ENCODE measurements at regions of chr4 and their contacts with region 1.

Region 1: GRCh38 chr4:186172546-186172945 is 18.8 kb upstream of the CYP4V2 start:
- DNase-seq: no peak
- ATAC-seq: no peak
- H3K4me3 ChIP-seq: no peak overlapping the region
- H3K27ac ChIP-seq: no peak overlapping the region
- H3K4me1 ChIP-seq: peaks cover 0 to 2% of the 10 kb centered on the region in 2 experiments; a peak in 2 of 5 replicates
- H3K27me3 ChIP-seq: peaks cover 27 to 45% of the 10 kb centered on the region in 2 experiments
- CTCF ChIP-seq: no peak
- EP300 ChIP-seq: no peak
- POLR2A ChIP-seq: no peak
- RAD21 ChIP-seq: no peak

Region 2: DNA sequence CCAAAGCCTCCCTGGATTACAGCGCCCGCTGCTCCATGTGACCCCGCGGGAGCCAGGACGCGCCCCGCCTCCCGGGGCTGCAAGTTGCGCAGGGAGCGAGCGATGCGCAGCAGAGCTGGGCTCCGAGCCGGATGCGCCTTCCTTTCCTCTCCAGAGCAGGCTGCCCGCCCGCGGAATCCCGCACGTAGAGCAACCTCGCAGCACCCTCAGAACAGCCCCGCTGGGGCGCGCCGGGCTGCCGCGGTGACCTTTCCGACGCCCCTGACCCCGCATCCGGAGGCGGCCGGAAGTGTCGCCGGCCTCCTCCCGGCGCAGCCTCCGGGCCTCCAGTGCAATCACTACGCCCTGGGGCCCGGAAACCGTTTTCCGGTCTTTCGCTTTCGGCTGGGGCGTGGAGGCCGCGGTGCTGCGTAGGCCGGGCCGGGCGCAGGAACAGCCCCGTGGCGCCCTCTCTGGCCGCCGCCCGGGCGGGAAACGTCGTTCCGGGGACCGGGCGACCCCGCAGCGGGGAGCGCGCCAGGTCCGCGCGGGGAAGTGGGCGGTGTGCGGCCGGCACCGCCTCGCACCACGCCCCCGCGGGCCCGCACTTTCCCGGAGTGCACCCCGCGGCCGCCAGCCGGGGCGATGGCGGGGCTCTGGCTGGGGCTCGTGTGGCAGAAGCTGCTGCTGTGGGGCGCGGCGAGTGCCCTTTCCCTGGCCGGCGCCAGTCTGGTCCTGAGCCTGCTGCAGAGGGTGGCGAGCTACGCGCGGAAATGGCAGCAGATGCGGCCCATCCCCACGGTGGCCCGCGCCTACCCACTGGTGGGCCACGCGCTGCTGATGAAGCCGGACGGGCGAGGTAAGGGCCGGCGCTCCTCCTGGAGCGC is 18.9 kb after region 1 on chr4 and contains the start of gene CYP4V2:
- CTCF ChIA-PET with region 1: no interaction called
- POLR2A ChIA-PET with region 1: interaction called, 12 read pairs
- in situ Hi-C with region 1: no loop called
- intact Hi-C with region 1: no loop called
- DNase-seq: peak; percentile 82 to 89 (median 86)
- ATAC-seq: peak; percentile 90
- H3K4me3 ChIP-seq: peak within 1 kb of the TSS; percentile 78
- H3K27ac ChIP-seq: peak within 1 kb of the TSS; percentile 94
- H3K4me1 ChIP-seq: peaks cover 13 to 16% of the 10 kb centered on the region in 2 experiments
- H3K27me3 ChIP-seq: no peaks in the 10 kb centered on the region
- CTCF ChIP-seq: peak; percentile 35 to 56 (median 52); a peak in 5 of 6 replicates
- EP300 ChIP-seq: peak; percentile 57; the same call in 1 of the 2 replicates
- POLR2A ChIP-seq: peak; percentile 86
- RAD21 ChIP-seq: 0 out of 4 replicates have a peak, but pooled peaks of 1 of the 2 experiments have one; percentile 20
- polyA plus RNA-seq, gene CYP4V2: 1.1 TPM